Lower leg skin (tissue), 4 donors: ENCODE measurements at regions of chr21 and their contacts with region 1.

Region 1: DNA sequence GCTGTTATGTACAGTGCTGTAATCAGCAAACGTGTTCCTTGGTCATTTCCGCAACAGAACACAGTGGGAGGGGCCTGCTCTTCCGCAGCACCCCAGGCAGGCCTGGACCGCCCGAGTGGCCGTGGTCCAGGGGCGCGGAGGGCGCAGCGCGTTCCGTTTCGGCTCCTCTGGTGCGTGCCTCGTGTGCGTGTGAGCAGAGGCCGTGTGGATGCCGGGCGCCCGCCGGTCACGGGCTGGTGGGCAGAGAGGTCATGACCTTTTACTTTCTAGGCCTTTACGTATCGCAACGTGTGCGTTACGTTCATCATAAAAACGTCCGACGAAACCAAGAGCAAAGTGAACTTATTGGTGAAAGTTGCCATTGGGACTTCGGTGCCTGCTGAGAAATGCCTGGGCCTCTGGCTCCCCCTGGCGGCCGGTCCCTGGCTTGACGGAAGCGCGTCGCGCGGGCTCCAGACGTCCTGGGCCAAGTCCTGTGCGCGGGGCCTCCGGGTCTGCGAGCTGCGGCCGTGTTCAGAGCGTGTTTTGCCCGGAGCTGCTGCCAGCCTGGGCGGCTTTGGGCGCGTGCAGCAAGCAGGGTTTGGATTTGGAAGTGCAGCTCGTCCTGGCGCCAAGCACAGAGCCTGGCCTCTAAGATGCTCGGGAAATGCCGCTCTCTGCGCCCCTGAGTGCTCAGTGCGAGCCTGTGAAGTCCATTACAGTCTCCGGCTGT is 34.4 kb downstream of the COL18A1 start:
- DNase-seq: peak; percentile 69 to 97
- H3K4me3 ChIP-seq: no peak overlapping the region
- CTCF ChIP-seq: peak in 2 of 3 donors; percentile 94 to 98
- POLR2A ChIP-seq: no peak

Region 2: DNA sequence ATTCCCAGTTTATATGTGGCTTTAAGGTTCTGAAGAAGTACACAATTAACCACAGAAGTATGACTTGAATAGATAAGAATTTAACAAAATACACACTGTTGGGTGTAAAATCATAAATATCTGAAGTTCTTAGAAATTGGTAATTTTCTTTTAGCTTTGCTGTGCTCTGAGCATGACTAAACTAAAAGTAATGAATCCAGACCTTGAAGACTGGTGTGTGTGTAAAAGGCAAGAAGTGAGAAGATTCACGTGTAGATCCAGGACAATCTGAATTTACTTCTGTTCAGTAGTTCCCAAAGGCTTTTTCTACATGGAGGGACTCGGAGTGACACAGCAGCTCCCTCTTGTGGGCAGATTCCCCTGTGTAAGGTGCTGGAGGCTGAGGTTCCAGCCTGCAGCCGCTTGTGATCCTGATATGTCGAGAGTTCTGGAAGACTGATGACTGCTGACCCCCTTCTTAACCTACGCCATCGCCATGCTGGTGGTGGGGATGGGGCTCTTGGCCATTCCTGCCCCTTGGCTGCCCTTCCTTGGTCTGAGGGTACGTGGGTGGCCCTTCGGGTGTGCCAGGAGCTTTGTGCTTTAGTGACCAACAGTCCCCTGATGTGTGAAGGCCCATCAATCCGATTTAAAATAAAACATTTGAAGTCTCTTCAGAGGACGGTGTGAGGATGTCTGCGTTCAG is 302.2 kb before region 1 on chr21:
- intact Hi-C with region 1: loop called (anchors 5 kb)
- DNase-seq: peak; percentile 88 to 96
- H3K4me3 ChIP-seq: no peak overlapping the region
- CTCF ChIP-seq: peak in 1 of 3 donors; percentile 40
- POLR2A ChIP-seq: no peak

Region 3: DNA sequence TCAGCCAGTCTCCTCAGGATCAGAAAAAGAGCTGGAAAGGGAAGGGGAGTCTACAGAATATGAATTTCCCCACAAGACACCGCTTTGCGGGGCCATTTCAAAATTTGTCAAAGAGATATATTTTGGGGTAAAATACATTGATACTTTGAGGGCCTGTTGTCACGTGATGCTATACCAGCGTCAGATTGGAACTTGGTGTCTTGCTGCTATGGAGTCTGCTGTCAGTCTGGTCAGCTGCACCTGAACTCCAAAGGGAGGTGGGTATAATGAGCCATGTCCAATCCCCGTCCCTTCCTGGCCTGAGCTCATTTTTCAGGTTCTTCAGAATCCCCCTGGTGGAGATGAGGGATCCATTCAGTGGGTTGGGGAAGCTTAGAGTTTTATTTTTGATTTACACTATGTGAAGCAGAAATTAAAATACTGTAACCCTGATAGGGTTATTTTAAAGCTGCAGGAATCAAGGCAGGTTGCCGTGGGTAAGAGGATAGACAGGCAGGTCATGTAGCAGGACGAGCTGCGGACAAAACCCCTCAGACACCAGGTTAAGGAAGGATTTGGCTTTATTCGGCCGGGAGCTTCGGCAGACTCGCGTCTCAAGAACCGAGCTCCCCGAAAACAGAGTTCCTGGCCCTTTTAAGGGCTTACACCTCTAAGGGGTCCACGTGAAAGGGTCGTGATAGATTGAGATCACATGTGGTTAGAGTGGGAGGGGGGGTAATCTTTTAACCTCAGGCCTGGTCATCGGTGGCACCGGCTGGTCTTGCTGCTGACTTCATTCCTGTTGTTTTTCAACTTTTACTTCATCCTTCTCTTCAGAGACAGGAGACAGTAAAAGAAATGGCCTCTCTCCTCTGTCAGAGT is 149.4 kb before region 1 on chr21:
- intact Hi-C with region 1: loop called (anchors 2 kb)
- DNase-seq: peak in 1 of 2 donors; percentile 78
- H3K4me3 ChIP-seq: no peak overlapping the region
- CTCF ChIP-seq: no peak
- POLR2A ChIP-seq: no peak